HepG2 (cell line): ENCODE measurements at regions of chr17 and their contacts with region 1.

Region 1: GRCh38 chr17:76408052-76408849 is 23.8 kb downstream of the SPHK1 start:
- DNase-seq: peak; percentile 62
- ATAC-seq: peak; percentile 83
- H3K4me3 ChIP-seq: no peak overlapping the region
- H3K27ac ChIP-seq: peak overlapping the region; percentile 24
- H3K4me1 ChIP-seq: peaks cover 20% of the 10 kb centered on the region
- H3K27me3 ChIP-seq: no peaks in the 10 kb centered on the region
- CTCF ChIP-seq: peak; percentile 97
- EP300 ChIP-seq: no peak
- POLR2A ChIP-seq: no peak
- RAD21 ChIP-seq: peak; percentile 87

Region 2: DNA sequence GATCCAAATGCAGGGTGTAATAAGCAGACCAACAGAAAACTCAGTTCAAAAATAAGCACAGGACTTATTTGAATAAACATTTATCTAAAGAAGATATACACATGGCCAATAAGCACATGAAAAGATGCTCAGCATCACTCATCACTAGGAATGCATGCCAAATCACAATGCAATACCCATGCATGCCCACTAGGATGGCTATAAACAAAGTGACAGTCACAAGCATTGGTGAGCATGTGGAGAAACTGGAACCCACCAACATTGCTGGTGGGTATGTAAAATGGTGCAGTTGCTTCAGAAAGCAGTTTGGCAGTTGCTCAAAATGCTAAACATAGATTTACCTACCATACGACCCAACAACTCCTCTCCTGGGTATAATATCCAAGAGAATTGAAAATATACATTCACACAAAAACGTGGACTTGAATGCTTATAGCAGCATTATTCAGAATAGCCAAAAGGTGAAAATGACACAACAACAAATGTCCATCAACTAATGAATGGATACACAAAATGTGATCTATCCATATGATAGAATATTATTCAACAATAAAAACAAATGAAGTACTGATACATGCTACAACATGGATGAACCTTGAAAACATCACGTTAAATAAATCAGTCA is 24.6 kb after region 1 on chr17:
- CTCF ChIA-PET with region 1: interaction called, 3 read pairs
- POLR2A ChIA-PET with region 1: no interaction called
- in situ Hi-C with region 1: no loop called
- intact Hi-C with region 1: loop called (anchors 2 kb)
- DNase-seq: peak; percentile 41
- ATAC-seq: peak; percentile 81
- H3K4me3 ChIP-seq: no peak overlapping the region
- H3K27ac ChIP-seq: no peak overlapping the region
- H3K4me1 ChIP-seq: peaks cover 22% of the 10 kb centered on the region
- H3K27me3 ChIP-seq: no peaks in the 10 kb centered on the region
- CTCF ChIP-seq: 0 out of 2 replicates have a peak, but pooled peaks have one; percentile 15
- EP300 ChIP-seq: no peak
- POLR2A ChIP-seq: no peak
- RAD21 ChIP-seq: no peak

Region 3: GRCh38 chr17:76452660-76453430 is 44.6 kb after region 1 on chr17 and contains the start of gene UBE2O:
- CTCF ChIA-PET with region 1: interaction called, 26 read pairs
- POLR2A ChIA-PET with region 1: interaction called, 3 read pairs
- in situ Hi-C with region 1: loop called (anchors 5 kb)
- intact Hi-C with region 1: loop called (anchors 1 kb)
- DNase-seq: peak; percentile 83
- ATAC-seq: peak; percentile 92
- H3K4me3 ChIP-seq: peak within 1 kb of the TSS; percentile 84 to 97 (median 92)
- H3K27ac ChIP-seq: peak within 1 kb of the TSS; percentile 67
- H3K4me1 ChIP-seq: peaks cover 42% of the 10 kb centered on the region
- H3K27me3 ChIP-seq: no peaks in the 10 kb centered on the region; a peak in 1 of 5 replicates
- CTCF ChIP-seq: peak; percentile 87
- EP300 ChIP-seq: no peak
- POLR2A ChIP-seq: peak in 1 of 2 experiments; percentile 90; a peak in 2 of 4 replicates
- RAD21 ChIP-seq: peak; percentile 42; the same call in 1 of the 2 replicates
- total RNA-seq, gene UBE2O: 21.5 and 22.3 TPM in 2 replicates

Region 4: DNA sequence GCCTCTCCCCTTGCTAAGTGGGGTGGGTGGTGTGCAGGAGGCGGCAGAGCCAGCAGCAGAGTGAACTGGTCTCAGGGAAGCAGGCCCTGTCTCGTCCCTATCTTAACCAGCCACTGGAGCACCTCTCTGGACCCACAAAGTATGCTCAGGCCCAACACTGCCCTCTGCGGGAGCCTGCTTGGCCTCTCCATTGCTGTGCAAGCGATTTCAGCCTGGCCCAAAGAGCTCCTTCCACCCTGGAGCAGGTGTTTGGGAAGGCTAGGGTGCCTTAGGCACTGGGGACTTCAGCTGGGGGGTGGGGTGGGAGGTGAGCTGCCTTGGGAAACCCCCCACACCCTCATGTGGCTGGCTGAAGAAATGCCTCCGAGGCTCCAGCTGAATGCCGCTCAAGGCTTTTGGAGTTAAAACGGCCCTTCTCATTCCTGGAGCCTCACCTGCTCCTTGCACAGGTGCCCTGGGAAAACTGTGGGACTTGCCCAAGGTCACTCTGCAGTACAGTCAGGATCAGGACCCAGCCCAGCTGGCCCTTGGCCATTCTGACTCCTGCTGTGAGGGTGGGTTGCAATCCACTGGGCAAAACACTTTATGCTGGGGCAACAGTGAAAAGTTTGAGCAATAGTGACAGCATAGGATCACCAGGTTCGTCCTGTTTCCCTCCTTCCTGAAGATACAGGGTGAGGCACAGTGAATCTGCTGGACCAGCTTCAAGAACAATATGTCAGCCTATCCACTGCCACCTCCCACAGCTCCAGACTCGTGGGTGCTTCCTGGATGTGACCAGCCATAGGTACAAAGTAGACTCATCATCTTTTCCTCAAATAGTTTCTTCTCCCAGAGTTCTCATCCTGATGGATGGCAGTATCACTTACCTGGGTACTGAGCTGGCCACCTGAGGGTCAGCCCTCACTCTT is 50.6 kb after region 1 on chr17:
- CTCF ChIA-PET with region 1: interaction called, 26 read pairs
- POLR2A ChIA-PET with region 1: interaction called, 3 read pairs
- in situ Hi-C with region 1: loop called (anchors 5 kb)
- intact Hi-C with region 1: loop called (anchors 1 kb)
- DNase-seq: peak; percentile 71
- ATAC-seq: peak; percentile 92
- H3K4me3 ChIP-seq: no peak overlapping the region
- H3K27ac ChIP-seq: no peak overlapping the region
- H3K4me1 ChIP-seq: peaks cover 45% of the 10 kb centered on the region
- H3K27me3 ChIP-seq: peaks cover 10 to 28% of the 10 kb centered on the region in 2 experiments; a peak in 4 of 5 replicates
- CTCF ChIP-seq: peak; percentile 86
- EP300 ChIP-seq: no peak
- POLR2A ChIP-seq: no peak
- RAD21 ChIP-seq: peak; percentile 81